ENCODE measurements at regions of chr3 and their contacts with region 1.

Region 1: DNA sequence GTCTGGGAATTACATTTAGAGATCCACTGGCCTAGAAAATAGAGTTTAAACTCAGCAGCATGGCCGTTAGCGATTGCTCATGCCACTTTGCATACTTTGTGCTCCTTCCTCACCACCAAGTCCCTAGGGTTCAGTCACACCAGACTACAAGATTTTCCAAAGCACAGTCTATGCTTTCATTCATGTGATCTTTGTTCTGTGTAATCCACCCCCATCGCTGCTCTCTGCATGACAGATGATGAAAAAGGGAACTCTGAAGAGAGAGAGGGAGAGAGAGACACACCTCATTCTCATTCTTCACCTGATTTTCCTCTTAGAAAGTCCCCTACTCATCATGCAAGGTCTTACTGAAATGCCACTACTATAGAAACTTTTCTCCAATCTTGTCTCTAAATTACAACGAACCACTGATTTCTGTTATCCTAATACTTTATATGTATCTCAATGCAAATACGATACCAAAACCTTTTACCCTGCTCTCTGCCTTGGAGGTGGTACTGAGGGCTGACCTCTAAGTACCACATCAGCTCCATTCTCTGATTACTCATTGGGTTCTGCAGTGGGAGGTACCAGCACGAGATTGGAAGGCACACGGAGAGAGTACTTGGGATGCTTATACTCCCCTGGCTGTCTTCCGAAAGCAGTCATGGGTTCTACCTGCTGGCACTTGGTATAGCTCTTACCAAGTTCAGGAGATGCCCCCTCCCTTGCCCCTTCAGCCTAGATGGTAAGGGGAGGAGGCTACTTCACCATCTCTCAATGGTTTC is 1.1 kb upstream of the PARP15 start:
- DNase-seq: peak; percentile 70
- H3K4me3 Mint-ChIP-seq: peak overlapping the region; percentile 35
- H3K27ac Mint-ChIP-seq: peak overlapping the region; percentile 82
- H3K4me1 Mint-ChIP-seq: peaks cover 61% of the 10 kb centered on the region
- H3K27me3 Mint-ChIP-seq: no peaks in the 10 kb centered on the region

Region 2: GRCh38 chr3:122548076-122548475 is 28.3 kb before region 1 on chr3:
- CTCF ChIA-PET with region 1: no interaction called
- POLR2A ChIA-PET with region 1: no interaction called
- intact Hi-C with region 1: no loop called
- DNase-seq: no peak
- H3K4me3 Mint-ChIP-seq: no peak overlapping the region
- H3K27ac Mint-ChIP-seq: no peak overlapping the region
- H3K4me1 Mint-ChIP-seq: no peaks in the 10 kb centered on the region
- H3K27me3 Mint-ChIP-seq: no peaks in the 10 kb centered on the region

Region 3: GRCh38 chr3:122586773-122587485 is 10.6 kb after region 1 on chr3:
- CTCF ChIA-PET with region 1: interaction called, 3 read pairs
- POLR2A ChIA-PET with region 1: no interaction called
- intact Hi-C with region 1: loop called (anchors 1 kb)
- DNase-seq: no peak
- H3K4me3 Mint-ChIP-seq: no peak overlapping the region
- H3K27ac Mint-ChIP-seq: peak overlapping the region; percentile 24
- H3K4me1 Mint-ChIP-seq: peaks cover 43% of the 10 kb centered on the region
- H3K27me3 Mint-ChIP-seq: no peaks in the 10 kb centered on the region

Region 4: GRCh38 chr3:122609798-122610559 is 33.6 kb after region 1 on chr3:
- CTCF ChIA-PET with region 1: no interaction called
- POLR2A ChIA-PET with region 1: interaction called, 9 read pairs
- intact Hi-C with region 1: loop called (anchors 1 kb)
- DNase-seq: peak; percentile 37
- H3K4me3 Mint-ChIP-seq: peak overlapping the region; percentile 17
- H3K27ac Mint-ChIP-seq: peak overlapping the region; percentile 87
- H3K4me1 Mint-ChIP-seq: peaks cover 21% of the 10 kb centered on the region
- H3K27me3 Mint-ChIP-seq: no peaks in the 10 kb centered on the region

Region 5: GRCh38 chr3:122646146-122646988 is 70.0 kb after region 1 on chr3:
- CTCF ChIA-PET with region 1: no interaction called
- POLR2A ChIA-PET with region 1: no interaction called
- intact Hi-C with region 1: loop called (anchors 1 kb)
- DNase-seq: peak; percentile 31
- H3K4me3 Mint-ChIP-seq: peak overlapping the region; percentile 6
- H3K27ac Mint-ChIP-seq: peak overlapping the region; percentile 65
- H3K4me1 Mint-ChIP-seq: peaks cover 35% of the 10 kb centered on the region
- H3K27me3 Mint-ChIP-seq: no peaks in the 10 kb centered on the region

Region 6: GRCh38 chr3:122668930-122669730 is 92.8 kb after region 1 on chr3:
- CTCF ChIA-PET with region 1: no interaction called
- POLR2A ChIA-PET with region 1: interaction called, 5 read pairs
- intact Hi-C with region 1: loop called (anchors 1 kb)
- DNase-seq: peak; percentile 64
- H3K4me3 Mint-ChIP-seq: no peak overlapping the region
- H3K27ac Mint-ChIP-seq: peak overlapping the region; percentile 25
- H3K4me1 Mint-ChIP-seq: peaks cover 15% of the 10 kb centered on the region
- H3K27me3 Mint-ChIP-seq: no peaks in the 10 kb centered on the region

Measured in activated CD4-positive, alpha-beta memory T cell treated with anti-CD3 and anti-CD28 coated beads for 36 hours (primary cell).